Transverse colon (tissue), 4 donors: ENCODE measurements at regions of chr16 and their contacts with region 1.

Region 1: DNA sequence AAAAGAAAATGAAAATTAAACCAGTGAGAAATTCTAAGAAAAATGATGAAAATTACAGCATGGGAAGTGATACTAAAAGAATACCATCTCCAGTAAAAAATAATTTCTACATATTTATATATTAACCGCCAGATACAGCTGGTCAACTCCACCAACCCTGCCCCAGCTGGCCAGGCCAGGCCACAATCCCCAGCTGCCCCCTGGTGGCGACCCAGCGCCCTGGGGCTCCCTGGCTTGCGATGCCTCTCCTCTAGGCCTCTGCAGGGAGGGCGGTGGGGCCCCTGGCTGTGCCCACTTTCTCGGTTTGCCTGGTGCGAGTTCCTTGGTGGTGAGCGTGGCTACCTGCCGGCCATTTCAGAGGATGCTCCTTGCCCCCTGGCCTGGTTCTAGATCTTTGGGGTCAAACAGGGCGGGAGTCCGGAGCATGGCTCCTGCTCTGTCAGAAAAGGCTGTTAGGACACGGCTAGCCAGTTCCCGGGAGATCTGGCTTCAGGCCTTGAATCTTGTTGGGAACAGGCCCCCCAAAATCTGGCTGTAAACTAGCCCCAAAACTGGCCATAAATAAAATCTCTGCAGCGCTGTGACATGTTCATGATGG is 14.5 kb downstream of the GLIS2 start:
- DNase-seq: peak; percentile 83
- H3K4me3 ChIP-seq: no peak overlapping the region
- H3K27ac ChIP-seq: peak overlapping the region in 1 of 4 donors; percentile 85
- H3K4me1 ChIP-seq: peaks cover 5 to 39% (median 26%) of the 10 kb centered on the region in 4 donors
- H3K27me3 ChIP-seq: peaks cover 22% of the 10 kb centered on the region
- CTCF ChIP-seq: peak; percentile 96 to 98 (median 97)
- EP300 ChIP-seq: no peak
- POLR2A ChIP-seq: no peak

Region 2: DNA sequence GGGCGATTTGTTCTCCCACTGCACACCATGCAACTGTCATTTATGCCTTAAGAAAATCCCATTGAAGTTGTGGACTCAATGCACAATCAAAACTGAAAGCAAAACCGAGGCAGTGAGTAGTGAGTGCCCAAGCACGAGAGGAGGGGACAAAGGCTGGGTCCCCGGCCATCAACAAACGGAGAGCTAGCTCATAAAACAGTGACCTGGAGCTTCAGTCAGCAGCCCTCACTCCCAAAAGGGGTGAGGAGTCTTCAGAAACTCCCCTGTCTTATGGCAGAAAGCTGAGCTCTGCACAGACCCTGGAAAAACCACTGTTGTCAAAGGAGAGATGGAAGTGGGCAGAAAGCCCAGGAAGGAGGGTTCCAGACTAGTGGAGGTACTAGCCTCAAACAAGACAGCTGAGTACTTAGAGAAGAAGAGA is 311.0 kb before region 1 on chr16:
- in situ Hi-C with region 1: no loop called
- intact Hi-C with region 1: no loop called
- DNase-seq: peak; percentile 35
- H3K4me3 ChIP-seq: peak overlapping the region in 3 of 4 donors; percentile 25 to 41 (median 32)
- H3K27ac ChIP-seq: peak overlapping the region; percentile 76 to 82 (median 79)
- H3K4me1 ChIP-seq: peaks cover 4 to 45% (median 30%) of the 10 kb centered on the region in 4 donors
- H3K27me3 ChIP-seq: no peaks in the 10 kb centered on the region
- CTCF ChIP-seq: no peak
- EP300 ChIP-seq: no peak
- POLR2A ChIP-seq: no peak

Region 3: GRCh38 chr16:4183237-4184036 is 146.9 kb before region 1 on chr16:
- in situ Hi-C with region 1: loop called in 1 of 4 experiments (anchors 25 kb)
- intact Hi-C with region 1: no loop called
- DNase-seq: peak; percentile 95
- H3K4me3 ChIP-seq: peak overlapping the region; percentile 42 to 86 (median 76)
- H3K27ac ChIP-seq: peak overlapping the region; percentile 94 to 98 (median 97)
- H3K4me1 ChIP-seq: peaks cover 4 to 10% (median 5%) of the 10 kb centered on the region in 4 donors
- H3K27me3 ChIP-seq: peaks cover 6% of the 10 kb centered on the region
- CTCF ChIP-seq: peak in 1 of 5 experiments; percentile 20
- EP300 ChIP-seq: no peak
- POLR2A ChIP-seq: peak; percentile 74

Region 4: GRCh38 chr16:4200000-4200780 is 130.2 kb before region 1 on chr16:
- in situ Hi-C with region 1: loop called in 1 of 4 experiments (anchors 25 kb)
- intact Hi-C with region 1: loop called (anchors 10 kb)
- DNase-seq: peak; percentile 79
- H3K4me3 ChIP-seq: no peak overlapping the region
- H3K27ac ChIP-seq: no peak overlapping the region
- H3K4me1 ChIP-seq: peaks cover 0 to 7% (median 6%) of the 10 kb centered on the region in 4 donors
- H3K27me3 ChIP-seq: no peaks in the 10 kb centered on the region
- CTCF ChIP-seq: peak; percentile 60 to 83 (median 74)
- EP300 ChIP-seq: no peak
- POLR2A ChIP-seq: no peak

Region 5: GRCh38 chr16:4288148-4288921 is 42.0 kb before region 1 on chr16:
- in situ Hi-C with region 1: loop called in 2 of 4 experiments (anchors 5 kb)
- intact Hi-C with region 1: loop called (anchors 2 kb)
- DNase-seq: peak; percentile 81
- H3K4me3 ChIP-seq: no peak overlapping the region
- H3K27ac ChIP-seq: no peak overlapping the region
- H3K4me1 ChIP-seq: peaks cover 7 to 17% (median 11%) of the 10 kb centered on the region in 4 donors
- H3K27me3 ChIP-seq: no peaks in the 10 kb centered on the region
- CTCF ChIP-seq: peak; percentile 89 to 97 (median 92)
- EP300 ChIP-seq: no peak
- POLR2A ChIP-seq: no peak

Region 6: GRCh38 chr16:4293822-4294457 is 36.4 kb before region 1 on chr16:
- in situ Hi-C with region 1: loop called in 2 of 4 experiments (anchors 5 kb)
- intact Hi-C with region 1: loop called (anchors 2 kb)
- DNase-seq: no peak
- H3K4me3 ChIP-seq: no peak overlapping the region
- H3K27ac ChIP-seq: peak overlapping the region; percentile 49 to 81 (median 60)
- H3K4me1 ChIP-seq: peaks cover 14 to 29% (median 20%) of the 10 kb centered on the region in 4 donors
- H3K27me3 ChIP-seq: no peaks in the 10 kb centered on the region
- CTCF ChIP-seq: no peak
- EP300 ChIP-seq: no peak
- POLR2A ChIP-seq: no peak